ENCODE measurements at regions of chr1 and their contacts with region 1.

Region 1: GRCh38 chr1:86472767-86473166 is 4.0 kb downstream of the CLCA1 start:
- DNase-seq: no peak
- H3K4me3 ChIP-seq: no peak overlapping the region
- H3K27me3 ChIP-seq: no peaks in the 10 kb centered on the region
- CTCF ChIP-seq: no peak

Region 2: DNA sequence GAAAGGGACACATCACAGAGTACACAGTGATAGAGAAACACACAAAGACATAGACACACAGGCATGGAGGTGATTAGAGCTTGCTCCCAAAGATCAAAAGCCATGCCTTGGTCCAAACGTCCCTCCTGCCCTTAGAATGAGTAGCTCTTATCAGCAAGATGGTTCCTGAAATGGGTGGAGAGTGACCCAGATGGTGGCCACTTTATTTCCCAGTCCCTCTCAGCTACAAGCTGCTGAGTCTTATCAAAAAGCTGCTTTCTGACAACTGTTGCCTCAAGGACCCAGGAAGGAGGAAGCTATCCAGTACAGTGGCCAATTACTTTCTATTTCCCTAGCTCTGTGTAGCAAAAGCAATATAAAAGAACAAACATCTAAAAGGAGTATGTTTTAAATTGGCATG is 11.8 kb before region 1 on chr1:
- CTCF ChIA-PET with region 1: interaction called, 41 read pairs
- POLR2A ChIA-PET with region 1: no interaction called
- DNase-seq: no peak
- H3K4me3 ChIP-seq: no peak overlapping the region
- H3K27me3 ChIP-seq: no peaks in the 10 kb centered on the region
- CTCF ChIP-seq: no peak

Region 3: DNA sequence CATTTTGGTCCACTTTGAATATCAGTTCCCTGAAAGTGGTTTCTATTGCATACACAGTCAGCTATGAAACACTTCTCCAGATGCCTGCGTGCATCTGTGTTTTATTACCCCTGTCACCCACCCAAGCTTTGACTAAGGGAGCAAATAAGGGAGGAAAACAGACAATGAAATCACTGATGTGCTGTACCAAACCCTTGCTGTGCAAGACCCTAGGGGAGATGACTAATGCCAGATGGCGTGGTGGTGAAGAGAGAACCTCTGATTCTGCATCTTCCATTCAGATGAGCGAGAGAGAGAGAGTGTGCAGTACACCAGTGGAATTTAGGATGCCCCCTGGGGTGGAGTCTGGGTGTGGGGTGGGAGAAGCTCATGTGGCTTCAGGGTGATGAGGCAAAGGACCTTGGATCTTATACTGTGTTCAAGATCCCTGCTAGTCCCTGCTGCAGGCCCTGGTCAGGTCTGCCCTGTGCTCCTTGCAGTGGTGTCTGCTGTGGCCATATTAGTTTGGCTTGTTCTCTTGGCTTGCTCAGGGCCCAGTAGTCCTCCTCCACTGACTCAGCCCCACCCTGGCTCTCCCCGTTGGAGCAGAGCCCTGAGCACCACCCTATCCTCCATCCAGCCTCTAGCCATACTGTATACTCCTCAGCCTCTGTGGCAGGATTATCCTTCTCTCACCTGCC is 14.5 kb after region 1 on chr1:
- CTCF ChIA-PET with region 1: interaction called, 46 read pairs
- POLR2A ChIA-PET with region 1: no interaction called
- DNase-seq: peak; percentile 99
- H3K4me3 ChIP-seq: no peak overlapping the region
- H3K27me3 ChIP-seq: no peaks in the 10 kb centered on the region
- CTCF ChIP-seq: no peak

Region 4: DNA sequence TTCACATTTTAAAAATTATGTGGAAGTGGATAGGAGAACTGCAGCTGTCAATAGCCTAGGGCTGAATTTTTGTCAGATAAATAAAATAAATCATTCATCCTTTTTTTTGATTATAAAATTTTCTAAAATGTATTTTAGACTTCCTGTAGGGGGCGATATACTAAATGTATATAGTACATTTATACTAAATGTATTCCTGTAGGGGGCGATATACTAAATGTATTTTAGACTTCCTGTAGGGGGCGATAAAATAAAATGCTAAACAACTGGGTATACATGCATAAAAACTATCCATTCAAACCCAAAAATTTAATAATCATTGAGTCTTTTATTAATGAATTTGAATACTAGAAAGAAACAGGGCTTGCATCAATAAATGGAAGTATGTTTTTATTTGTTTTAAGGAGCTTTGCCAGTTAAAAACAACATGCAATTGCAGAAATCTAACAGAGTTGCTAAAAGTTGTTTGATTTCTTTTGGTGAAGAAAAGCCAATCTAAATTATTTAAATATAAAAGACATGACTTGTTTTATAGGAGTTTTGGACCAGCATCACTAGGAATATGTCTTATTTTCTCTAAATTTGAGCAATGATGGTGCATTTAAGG is 27.3 kb after region 1 on chr1:
- CTCF ChIA-PET with region 1: interaction called, 75 read pairs
- POLR2A ChIA-PET with region 1: no interaction called
- DNase-seq: no peak
- H3K4me3 ChIP-seq: no peak overlapping the region
- H3K27me3 ChIP-seq: peaks cover 3% of the 10 kb centered on the region
- CTCF ChIP-seq: peak; percentile 61

Region 5: GRCh38 chr1:86507935-86508582 is 35.3 kb after region 1 on chr1:
- CTCF ChIA-PET with region 1: interaction called, 75 read pairs
- POLR2A ChIA-PET with region 1: no interaction called
- DNase-seq: no peak
- H3K4me3 ChIP-seq: no peak overlapping the region
- H3K27me3 ChIP-seq: no peaks in the 10 kb centered on the region
- CTCF ChIP-seq: peak; percentile 61

Region 6: DNA sequence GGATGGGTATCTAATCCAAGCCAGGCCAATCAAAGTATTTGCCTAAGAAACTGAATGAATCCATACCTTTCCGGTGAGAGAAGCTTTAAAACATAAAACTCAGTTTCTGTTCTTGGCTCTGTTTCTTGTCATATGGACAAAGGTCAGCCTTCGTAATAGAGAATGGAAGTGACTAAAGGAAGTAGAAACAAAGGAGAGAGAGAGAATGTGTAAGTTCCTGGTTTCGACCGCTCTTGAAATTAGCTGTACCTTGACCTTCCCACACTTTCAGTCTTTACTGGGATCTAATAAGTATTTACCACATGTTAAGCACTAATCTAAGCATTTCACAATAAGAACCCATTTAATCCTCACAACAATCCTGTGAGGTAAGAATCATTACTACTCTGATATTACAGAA is 54.5 kb after region 1 on chr1:
- CTCF ChIA-PET with region 1: no interaction called
- POLR2A ChIA-PET with region 1: no interaction called
- DNase-seq: no peak
- H3K4me3 ChIP-seq: no peak overlapping the region
- H3K27me3 ChIP-seq: no peaks in the 10 kb centered on the region; the same call in 1 of the 2 replicates
- CTCF ChIP-seq: no peak

Region 7: GRCh38 chr1:86567878-86568277 is 95.1 kb after region 1 on chr1:
- CTCF ChIA-PET with region 1: no interaction called
- POLR2A ChIA-PET with region 1: no interaction called
- DNase-seq: no peak
- H3K4me3 ChIP-seq: no peak overlapping the region
- H3K27me3 ChIP-seq: 0 out of 2 replicates have a peak, but pooled peaks cover 2% of the 10 kb centered on the region
- CTCF ChIP-seq: no peak

Measured in BJ (cell line).